Activated CD4-positive, alpha-beta T cell treated with anti-CD3 and anti-CD28 coated beads, Interleukin-2, amount 10 ng/mL, durations not matched to agents 24 days and 14 days (primary cell): ENCODE measurements at regions of chr17 and their contacts with region 1.

Region 1: DNA sequence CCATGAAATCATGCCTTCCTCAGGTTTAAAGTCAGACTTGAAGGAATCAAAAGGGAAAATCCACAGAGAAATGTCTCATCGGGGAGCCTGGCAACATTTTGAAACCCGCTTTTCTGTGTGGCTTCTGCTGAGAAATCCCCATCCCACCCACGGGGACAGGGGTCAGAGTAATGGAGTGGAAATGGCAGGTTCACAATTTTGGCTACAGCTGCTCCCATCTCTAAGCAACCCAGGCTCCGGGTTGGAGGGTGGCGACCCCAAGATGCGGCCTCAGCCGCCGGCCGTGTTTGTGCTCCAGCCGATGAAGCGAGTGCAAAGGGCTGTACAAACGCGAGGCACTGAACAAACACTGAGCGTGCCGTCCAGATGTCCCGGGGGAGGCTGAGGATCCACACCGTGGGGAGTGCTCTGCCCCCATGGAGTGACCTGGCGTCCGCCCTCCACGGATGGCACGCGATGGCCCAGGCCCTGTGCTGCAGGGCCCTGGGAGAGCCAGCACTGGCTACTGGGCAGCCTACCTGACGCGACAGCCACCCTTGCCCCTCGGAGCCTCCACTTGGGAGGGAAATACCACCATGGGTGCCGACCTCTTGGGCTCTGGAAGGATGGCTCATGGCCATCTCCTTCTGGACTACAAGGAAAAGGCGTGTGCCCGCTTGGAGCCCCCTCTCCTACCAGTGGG is 22.1 kb downstream of the SLC43A2 start:
- DNase-seq: no peak
- H3K4me3 Mint-ChIP-seq: peak overlapping the region; percentile 26
- H3K27ac Mint-ChIP-seq: peak overlapping the region; percentile 92
- H3K4me1 Mint-ChIP-seq: peaks cover 21% of the 10 kb centered on the region
- H3K27me3 Mint-ChIP-seq: no peaks in the 10 kb centered on the region

Region 2: GRCh38 chr17:1573916-1574696 is 32.4 kb before region 1 on chr17:
- intact Hi-C with region 1: loop called (anchors 5 kb)
- DNase-seq: peak; percentile 90
- H3K4me3 Mint-ChIP-seq: no peak overlapping the region
- H3K27ac Mint-ChIP-seq: no peak overlapping the region
- H3K4me1 Mint-ChIP-seq: peaks cover 8% of the 10 kb centered on the region
- H3K27me3 Mint-ChIP-seq: no peaks in the 10 kb centered on the region

Region 3: GRCh38 chr17:1673041-1673785 is 66.7 kb after region 1 on chr17:
- intact Hi-C with region 1: no loop called
- DNase-seq: peak; percentile 61
- H3K4me3 Mint-ChIP-seq: no peak overlapping the region
- H3K27ac Mint-ChIP-seq: no peak overlapping the region
- H3K4me1 Mint-ChIP-seq: peaks cover 16% of the 10 kb centered on the region
- H3K27me3 Mint-ChIP-seq: no peaks in the 10 kb centered on the region